ENCODE measurements at regions of chr4 and their contacts with region 1.

Region 1: DNA sequence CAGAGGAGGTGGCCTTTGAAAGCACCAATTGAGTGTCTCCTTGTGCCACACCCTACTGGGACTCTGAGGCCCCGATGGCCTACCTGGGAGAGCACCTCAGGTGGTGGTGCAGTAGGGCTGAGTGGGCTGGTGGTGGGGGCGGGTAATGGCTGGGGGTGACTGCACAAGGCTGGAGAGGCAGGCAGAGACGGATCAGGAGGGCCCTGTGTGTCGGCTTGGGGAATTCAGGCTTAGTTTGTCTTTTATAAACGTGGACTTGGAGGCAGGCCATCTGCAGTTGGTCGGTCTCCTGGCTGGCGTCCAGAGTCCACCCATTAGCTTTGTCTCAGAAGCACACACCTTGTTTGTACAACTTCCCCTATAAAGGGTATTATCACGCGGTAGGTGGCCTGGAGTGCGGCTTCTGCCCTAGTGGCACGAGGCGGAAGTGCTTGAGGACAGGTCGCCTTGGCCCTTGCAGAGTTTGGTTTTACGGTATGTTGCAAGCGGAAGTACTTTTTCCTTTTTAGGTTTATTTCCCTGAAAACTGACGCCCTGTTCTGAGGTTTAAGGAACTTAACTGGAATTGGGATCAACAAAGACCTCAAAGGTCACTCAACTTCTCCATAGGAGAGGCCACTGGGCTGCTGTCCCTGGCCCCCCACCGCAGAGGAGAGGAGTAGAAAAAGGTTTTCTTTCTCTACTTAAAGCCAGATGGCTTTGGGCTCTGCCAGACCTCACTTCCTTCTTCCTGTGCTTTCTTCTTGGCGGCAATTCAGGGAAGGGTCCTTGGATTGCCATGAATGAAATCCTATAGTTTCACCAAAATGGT is 8.0 kb downstream of the TBC1D14 start:
- DNase-seq: peak; percentile 76
- ATAC-seq: peak; percentile 50
- H3K4me3 Mint-ChIP-seq: peak overlapping the region; percentile 53
- H3K27ac Mint-ChIP-seq: peak overlapping the region; percentile 95
- H3K4me1 Mint-ChIP-seq: peaks cover 67% of the 10 kb centered on the region
- H3K27me3 Mint-ChIP-seq: no peaks in the 10 kb centered on the region

Region 2: DNA sequence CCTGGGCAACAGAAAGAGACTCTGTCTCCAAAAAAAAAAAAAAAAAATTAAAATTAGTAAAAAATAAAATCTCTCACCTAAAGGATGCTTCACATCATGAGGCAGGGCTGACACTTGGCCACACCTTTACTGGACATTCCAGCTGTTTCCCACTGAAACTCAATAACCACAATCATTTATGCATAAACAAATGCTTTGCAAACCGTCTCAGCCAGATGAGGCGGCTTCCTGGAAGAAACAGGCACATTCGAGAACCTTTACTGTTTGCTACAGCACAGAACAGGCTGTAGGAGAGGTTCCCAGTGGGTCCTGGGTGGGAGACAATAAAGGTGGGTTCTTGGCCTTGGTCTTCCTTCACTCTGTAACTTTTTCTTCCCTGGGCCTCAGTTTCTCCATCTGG is 18.9 kb before region 1 on chr4:
- CTCF ChIA-PET with region 1: interaction called, 11 read pairs
- POLR2A ChIA-PET with region 1: no interaction called
- intact Hi-C with region 1: no loop called
- DNase-seq: peak; percentile 8
- ATAC-seq: no peak
- H3K4me3 Mint-ChIP-seq: no peak overlapping the region
- H3K27ac Mint-ChIP-seq: peak overlapping the region; percentile 66
- H3K4me1 Mint-ChIP-seq: peaks cover 22% of the 10 kb centered on the region
- H3K27me3 Mint-ChIP-seq: no peaks in the 10 kb centered on the region

Region 3: GRCh38 chr4:6942238-6942800 is 24.7 kb after region 1 on chr4:
- CTCF ChIA-PET with region 1: interaction called, 5 read pairs
- POLR2A ChIA-PET with region 1: no interaction called
- intact Hi-C with region 1: loop called in 1 of 2 experiments (anchors 2 kb)
- DNase-seq: peak; percentile 52
- ATAC-seq: peak; percentile 81
- H3K4me3 Mint-ChIP-seq: peak overlapping the region; percentile 18
- H3K27ac Mint-ChIP-seq: peak overlapping the region; percentile 79
- H3K4me1 Mint-ChIP-seq: peaks cover 61% of the 10 kb centered on the region
- H3K27me3 Mint-ChIP-seq: no peaks in the 10 kb centered on the region

Region 4: DNA sequence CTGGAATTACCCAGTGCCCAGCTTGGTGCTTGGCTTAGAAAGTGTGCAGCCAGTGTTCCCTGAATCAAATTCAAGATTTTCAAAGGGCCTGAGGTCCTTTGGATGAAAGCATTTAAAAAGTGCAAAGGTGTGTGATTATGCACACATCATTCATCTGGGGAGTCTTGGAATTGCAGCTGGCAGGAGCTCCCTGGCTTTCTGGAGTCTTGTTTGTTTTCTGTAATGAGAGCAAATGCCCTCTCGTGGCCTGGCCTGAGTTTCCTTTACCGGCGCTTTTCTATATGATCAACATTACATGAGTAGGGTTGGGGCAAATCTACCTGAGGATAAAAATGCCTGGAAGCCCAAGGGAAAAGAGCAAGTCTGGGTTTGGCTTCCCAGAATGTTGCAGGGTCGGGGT is 250.0 kb after region 1 on chr4:
- CTCF ChIA-PET with region 1: no interaction called
- POLR2A ChIA-PET with region 1: no interaction called
- intact Hi-C with region 1: no loop called
- DNase-seq: no peak
- ATAC-seq: no peak
- H3K4me3 Mint-ChIP-seq: no peak overlapping the region
- H3K27ac Mint-ChIP-seq: no peak overlapping the region
- H3K4me1 Mint-ChIP-seq: no peaks in the 10 kb centered on the region
- H3K27me3 Mint-ChIP-seq: peaks cover 2% of the 10 kb centered on the region

Measured in activated CD4-positive, alpha-beta T cell treated with anti-CD3 and anti-CD28 coated beads for 36 hours (primary cell).